Activated CD4-positive, alpha-beta T cell treated with anti-CD3 and anti-CD28 coated beads, Interleukin-2, amount 10 ng/mL, durations not matched to agents 24 days and 14 days (primary cell): ENCODE measurements at regions of chr2 and their contacts with region 1.

Region 1: DNA sequence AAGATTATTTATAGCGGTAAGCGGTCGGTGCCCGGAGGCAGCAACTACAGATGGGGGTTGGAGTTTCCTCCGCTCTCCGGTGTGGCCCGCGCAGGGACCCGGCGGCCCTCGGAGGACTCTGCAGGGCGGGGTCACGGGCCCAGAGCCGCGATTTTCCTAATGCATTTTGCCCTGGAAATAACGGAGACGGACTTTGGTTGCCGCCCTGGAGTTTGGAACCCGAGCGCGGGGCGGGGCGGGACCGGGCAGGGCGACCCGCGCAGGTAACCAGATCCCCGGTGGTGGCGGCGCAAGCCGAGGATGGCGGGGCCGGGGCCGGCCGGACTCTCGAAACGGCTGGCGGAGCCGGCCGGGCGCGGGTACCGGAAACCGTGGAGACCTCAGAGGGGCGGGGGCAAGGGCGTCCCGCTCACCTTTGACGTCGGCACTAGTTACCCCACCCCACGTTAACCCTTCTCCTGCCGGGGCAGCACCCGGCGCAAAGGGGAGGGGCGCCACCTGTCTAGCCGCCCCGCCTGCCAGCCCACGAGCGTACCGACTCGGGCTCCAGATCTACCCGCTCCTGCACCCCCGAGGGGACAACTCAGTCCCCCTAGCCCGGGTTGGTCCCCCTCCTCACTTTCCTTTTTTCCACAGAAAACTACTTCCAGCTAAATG is 2.9 kb downstream of the CYP26B1 start:
- DNase-seq: no peak
- H3K4me3 Mint-ChIP-seq: no peak overlapping the region
- H3K27ac Mint-ChIP-seq: no peak overlapping the region
- H3K4me1 Mint-ChIP-seq: peaks cover 16% of the 10 kb centered on the region
- H3K27me3 Mint-ChIP-seq: peaks cover 53% of the 10 kb centered on the region

Region 2: GRCh38 chr2:70887550-70888246 is 1257.1 kb before region 1 on chr2:
- intact Hi-C with region 1: loop called (anchors 5 kb)
- DNase-seq: peak; percentile 77
- H3K4me3 Mint-ChIP-seq: peak overlapping the region; percentile 83
- H3K27ac Mint-ChIP-seq: peak overlapping the region; percentile 34
- H3K4me1 Mint-ChIP-seq: peaks cover 23% of the 10 kb centered on the region
- H3K27me3 Mint-ChIP-seq: peaks cover 90% of the 10 kb centered on the region